A673 (cell line): ENCODE measurements at regions of chr12 and their contacts with region 1.

Region 1: DNA sequence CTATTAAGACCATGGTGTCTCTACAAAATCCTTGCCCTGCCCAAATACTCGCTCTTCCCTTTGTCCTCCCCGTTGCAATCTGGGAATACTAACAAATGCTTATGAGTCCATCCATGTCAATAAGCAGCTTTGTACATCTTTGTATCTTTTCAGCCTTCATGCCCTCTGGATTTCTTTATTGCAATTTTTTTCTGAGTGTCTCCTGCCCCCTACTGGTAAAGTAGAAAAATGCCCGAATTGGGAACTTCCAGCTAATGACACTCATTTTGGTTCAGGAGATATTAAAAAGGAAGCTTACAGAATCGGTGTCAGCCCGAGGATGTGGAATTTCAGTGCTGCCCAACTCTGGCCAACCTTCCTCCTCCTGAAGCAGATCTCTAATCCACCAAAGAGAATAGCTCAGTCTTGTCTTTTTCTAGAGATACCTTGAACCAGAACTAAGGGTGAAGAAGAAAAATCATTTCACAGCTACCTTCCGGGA is 46.0 kb downstream of the SH2B3 start:
- DNase-seq: peak; percentile 82
- H3K4me3 ChIP-seq: no peak overlapping the region
- H3K27ac ChIP-seq: no peak overlapping the region
- H3K4me1 ChIP-seq: peaks cover 47% of the 10 kb centered on the region
- H3K27me3 ChIP-seq: no peaks in the 10 kb centered on the region
- CTCF ChIP-seq: peak; percentile 89

Region 2: DNA sequence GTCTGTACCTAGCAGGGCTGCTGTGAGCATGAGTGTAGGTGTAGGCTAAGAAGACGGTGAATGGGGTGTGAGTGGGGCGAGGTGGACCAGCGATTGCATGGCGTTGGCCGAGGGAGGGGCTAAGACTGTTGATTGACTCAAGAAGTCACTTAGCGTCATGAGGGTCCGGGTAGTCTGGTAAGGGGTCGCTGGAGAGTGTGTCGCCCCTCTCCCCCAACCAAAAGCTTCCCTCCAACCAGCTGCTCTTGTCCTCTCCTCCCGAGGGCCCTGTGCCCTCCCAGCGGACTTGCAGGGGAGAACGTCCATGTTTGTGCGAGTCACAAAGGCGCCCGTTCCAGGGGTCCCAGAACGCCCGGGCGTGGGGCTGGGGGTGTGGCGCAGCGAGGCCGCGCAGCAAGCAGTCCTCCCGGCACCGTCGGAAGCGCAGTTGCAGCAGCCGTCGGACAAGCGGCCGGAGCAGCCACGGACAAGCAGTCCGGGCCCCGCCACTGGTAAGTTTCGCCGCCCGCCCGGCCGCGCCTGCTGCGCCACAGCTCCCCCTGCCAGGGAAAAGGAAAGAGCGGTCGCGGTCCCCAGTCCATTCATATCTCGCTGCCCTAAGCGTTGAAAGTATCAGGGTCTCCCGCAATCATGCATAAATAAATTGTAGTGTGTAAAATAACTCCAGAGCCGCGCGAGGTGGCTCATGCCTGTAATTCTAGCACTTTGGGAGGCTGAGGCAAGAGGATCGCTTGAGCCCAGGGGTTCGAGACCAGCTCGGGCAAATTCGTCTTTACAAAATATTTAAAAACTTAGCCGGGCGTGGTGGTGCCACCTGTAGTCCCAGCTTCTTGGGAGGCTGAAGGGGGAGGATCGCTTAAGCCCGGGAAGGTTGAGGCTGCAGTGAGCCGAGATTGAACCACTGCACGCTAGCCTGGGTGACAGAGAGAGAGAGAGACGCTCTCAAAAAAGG is 604.8 kb before region 1 on chr12 and contains the start of gene CCDC63:
- CTCF ChIA-PET with region 1: interaction called, 13 read pairs
- POLR2A ChIA-PET with region 1: no interaction called
- intact Hi-C with region 1: no loop called
- DNase-seq: peak; percentile 54
- H3K4me3 ChIP-seq: peak within 1 kb of the TSS; percentile 36
- H3K27ac ChIP-seq: no peak within 1 kb of the TSS
- H3K4me1 ChIP-seq: peaks cover 17% of the 10 kb centered on the region
- H3K27me3 ChIP-seq: no peaks in the 10 kb centered on the region
- CTCF ChIP-seq: peak; percentile 61
- total RNA-seq, gene CCDC63: 0.24 TPM in 1 of 2 replicates, not detected in the other

Region 3: GRCh38 chr12:111330800-111331752 is 120.6 kb before region 1 on chr12:
- CTCF ChIA-PET with region 1: interaction called, 25 read pairs
- POLR2A ChIA-PET with region 1: no interaction called
- intact Hi-C with region 1: loop called (anchors 2 kb)
- DNase-seq: peak; percentile 83
- H3K4me3 ChIP-seq: no peak overlapping the region
- H3K27ac ChIP-seq: no peak overlapping the region
- H3K4me1 ChIP-seq: no peaks in the 10 kb centered on the region
- H3K27me3 ChIP-seq: no peaks in the 10 kb centered on the region
- CTCF ChIP-seq: peak; percentile 62

Region 4: DNA sequence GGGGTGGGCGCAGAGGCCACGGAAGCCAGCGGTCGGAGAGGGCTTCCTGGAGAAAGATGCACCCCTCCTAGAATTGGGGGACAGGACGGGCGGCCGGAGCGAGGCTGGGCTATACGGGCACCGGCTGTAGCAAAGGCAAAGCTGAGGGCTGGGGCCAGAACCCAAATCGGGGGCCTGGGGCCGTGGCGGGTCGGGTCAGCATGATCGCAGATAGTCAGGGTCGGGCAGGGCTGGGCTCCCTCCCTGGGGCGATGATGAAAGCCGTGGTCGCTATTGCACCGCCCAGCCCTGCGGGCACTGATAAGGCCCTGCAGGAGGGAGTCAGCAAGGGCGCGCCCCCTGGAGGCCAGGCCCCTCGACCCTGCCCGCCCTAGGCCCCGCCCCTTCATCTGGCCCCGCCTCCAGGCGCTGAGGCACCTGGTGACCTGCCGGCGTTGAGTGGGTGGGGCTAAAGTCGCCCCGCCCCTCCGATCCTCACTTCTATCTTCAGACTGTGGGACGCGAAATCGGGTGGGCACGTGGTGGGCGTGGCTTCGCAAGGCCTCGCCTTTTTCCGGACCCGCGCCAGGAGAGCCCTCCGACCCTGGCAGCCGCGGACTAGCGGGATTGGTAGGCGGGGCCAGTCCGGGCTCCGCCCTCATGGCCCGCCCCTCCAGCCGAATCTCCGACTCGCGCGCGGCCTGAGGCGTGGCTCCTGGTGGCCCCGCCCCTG is 46.4 kb before region 1 on chr12:
- CTCF ChIA-PET with region 1: interaction called, 11 read pairs
- POLR2A ChIA-PET with region 1: no interaction called
- intact Hi-C with region 1: loop called (anchors 2 kb)
- DNase-seq: peak; percentile 99
- H3K4me3 ChIP-seq: peak overlapping the region; percentile 80
- H3K27ac ChIP-seq: peak overlapping the region; percentile 98
- H3K4me1 ChIP-seq: peaks cover 48% of the 10 kb centered on the region
- H3K27me3 ChIP-seq: no peaks in the 10 kb centered on the region
- CTCF ChIP-seq: peak; percentile 60; the same call in 1 of the 2 replicates

Region 5: GRCh38 chr12:111636209-111636945 is 184.7 kb after region 1 on chr12:
- CTCF ChIA-PET with region 1: interaction called, 11 read pairs
- POLR2A ChIA-PET with region 1: no interaction called
- intact Hi-C with region 1: no loop called
- DNase-seq: peak; percentile 65
- H3K4me3 ChIP-seq: no peak overlapping the region
- H3K27ac ChIP-seq: peak overlapping the region; percentile 89
- H3K4me1 ChIP-seq: peaks cover 25% of the 10 kb centered on the region
- H3K27me3 ChIP-seq: no peaks in the 10 kb centered on the region
- CTCF ChIP-seq: no peak